ENCODE measurements at regions of chr1 and their contacts with region 1.

Region 1: GRCh38 chr1:91529856-91530255 is 29.2 kb downstream of the CDC7 start:
- DNase-seq: no peak
- ATAC-seq: peak; percentile 30
- H3K4me3 Mint-ChIP-seq: no peak overlapping the region
- H3K27ac Mint-ChIP-seq: peak overlapping the region; percentile 67
- H3K4me1 Mint-ChIP-seq: peaks cover 35% of the 10 kb centered on the region
- H3K27me3 Mint-ChIP-seq: no peaks in the 10 kb centered on the region

Region 2: GRCh38 chr1:91545506-91546300 is 15.8 kb after region 1 on chr1:
- CTCF ChIA-PET with region 1: interaction called, 12 read pairs
- DNase-seq: no peak
- ATAC-seq: no peak
- H3K4me3 Mint-ChIP-seq: no peak overlapping the region
- H3K27ac Mint-ChIP-seq: no peak overlapping the region
- H3K4me1 Mint-ChIP-seq: peaks cover 68% of the 10 kb centered on the region
- H3K27me3 Mint-ChIP-seq: no peaks in the 10 kb centered on the region

Region 3: DNA sequence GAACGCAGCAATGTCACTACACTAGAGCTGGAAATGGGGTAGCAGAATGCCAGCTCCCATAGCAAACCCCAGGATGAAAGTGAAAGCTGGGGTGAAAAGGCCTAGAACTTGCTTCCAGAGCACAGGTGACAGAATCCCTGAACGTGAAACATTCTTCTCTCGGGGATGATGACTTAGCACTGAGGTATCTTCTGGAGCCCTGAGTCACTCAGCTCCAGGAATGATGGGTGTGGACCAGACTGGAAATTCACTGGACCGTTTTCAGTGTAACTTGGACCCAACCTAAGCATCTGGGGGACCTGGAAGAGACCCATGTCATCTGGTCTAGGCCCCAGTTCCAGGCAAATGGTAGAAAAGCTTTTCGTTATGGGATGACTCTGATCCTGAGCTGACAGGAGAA is 79.7 kb after region 1 on chr1:
- CTCF ChIA-PET with region 1: no interaction called
- DNase-seq: no peak
- ATAC-seq: no peak
- H3K4me3 Mint-ChIP-seq: no peak overlapping the region
- H3K27ac Mint-ChIP-seq: no peak overlapping the region
- H3K4me1 Mint-ChIP-seq: no peaks in the 10 kb centered on the region
- H3K27me3 Mint-ChIP-seq: no peaks in the 10 kb centered on the region